Right ventricle myocardium inferior (tissue), 1 donor: ENCODE measurements at regions of chr7 and their contacts with region 1.

Region 1: GRCh38 chr7:134789967-134790685 is 10.7 kb downstream of the CALD1 start:
- DNase-seq: no peak
- ATAC-seq: peak; percentile 78

Region 2: GRCh38 chr7:134831862-134832261 is 41.7 kb after region 1 on chr7:
- intact Hi-C with region 1: loop called (anchors 5 kb)
- DNase-seq: no peak
- ATAC-seq: peak; percentile 42